Activated CD4-positive, alpha-beta memory T cell treated with anti-CD3 and anti-CD28 coated beads, Interleukin-2, amount 10 ng/mL, durations not matched to agents 7 days and 5 days (primary cell): ENCODE measurements at regions of chr9 and their contacts with region 1.

Region 1: GRCh38 chr9:83334320-83334719 is 203.9 kb downstream of the FRMD3 start:
- DNase-seq: peak; percentile 77
- H3K4me3 Mint-ChIP-seq: no peak overlapping the region
- H3K27ac Mint-ChIP-seq: no peak overlapping the region
- H3K4me1 Mint-ChIP-seq: peaks cover 4% of the 10 kb centered on the region
- H3K27me3 Mint-ChIP-seq: no peaks in the 10 kb centered on the region

Region 2: DNA sequence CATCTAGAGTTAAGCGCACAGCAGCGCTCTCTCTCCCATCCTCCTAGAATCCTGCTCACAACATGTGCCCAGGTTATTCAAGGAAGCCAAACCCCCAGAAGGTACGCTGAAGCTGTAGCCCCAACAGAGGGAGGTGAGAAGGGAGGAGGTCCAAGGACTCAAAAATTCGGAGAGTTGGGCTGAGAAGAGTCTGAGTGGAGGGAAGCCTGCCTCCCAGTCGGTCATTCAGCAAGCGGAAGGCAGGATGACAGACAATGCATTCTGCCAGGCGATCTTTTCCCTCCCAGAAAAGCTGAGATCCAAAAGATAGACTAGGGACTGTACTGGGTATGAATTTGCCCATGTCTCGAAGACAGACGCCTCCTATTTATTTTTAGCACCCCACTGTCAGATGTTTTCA is 14.7 kb after region 1 on chr9:
- CTCF ChIA-PET with region 1: interaction called, 10 read pairs
- POLR2A ChIA-PET with region 1: no interaction called
- DNase-seq: no peak
- H3K4me3 Mint-ChIP-seq: no peak overlapping the region
- H3K27ac Mint-ChIP-seq: no peak overlapping the region
- H3K4me1 Mint-ChIP-seq: no peaks in the 10 kb centered on the region
- H3K27me3 Mint-ChIP-seq: no peaks in the 10 kb centered on the region

Region 3: GRCh38 chr9:83544002-83544698 is 209.8 kb after region 1 on chr9:
- CTCF ChIA-PET with region 1: interaction called, 99 read pairs
- POLR2A ChIA-PET with region 1: no interaction called
- DNase-seq: no peak
- H3K4me3 Mint-ChIP-seq: no peak overlapping the region
- H3K27ac Mint-ChIP-seq: no peak overlapping the region
- H3K4me1 Mint-ChIP-seq: no peaks in the 10 kb centered on the region
- H3K27me3 Mint-ChIP-seq: peaks cover 13% of the 10 kb centered on the region

Region 4: DNA sequence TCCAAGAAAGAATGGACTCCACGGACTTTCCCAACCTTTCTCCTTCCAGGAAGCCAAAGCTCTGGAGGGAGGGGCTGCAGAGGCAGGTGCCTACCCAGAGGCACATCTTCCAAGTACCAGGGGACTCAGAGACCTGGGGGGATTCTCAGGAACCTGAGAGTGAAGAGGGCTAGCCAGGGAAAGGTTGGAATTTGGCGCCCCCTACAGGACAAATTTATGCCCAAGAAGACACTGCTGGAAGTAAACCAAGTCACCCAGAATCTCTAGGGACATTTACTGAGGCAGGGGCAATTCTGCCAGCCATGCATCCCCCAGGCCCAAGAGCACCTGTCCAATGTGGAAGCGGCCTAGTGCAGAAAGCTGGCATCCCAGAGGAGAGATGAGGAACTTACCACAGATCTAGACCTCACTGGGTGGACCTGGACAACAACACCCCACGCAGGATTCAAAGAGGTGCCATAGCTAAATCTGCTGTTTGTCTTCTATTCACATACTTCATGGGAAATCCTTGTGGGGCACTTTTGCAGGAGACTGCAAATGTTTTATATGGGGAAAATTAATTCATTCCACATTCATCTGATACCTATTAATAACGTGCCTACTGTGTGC is 262.7 kb after region 1 on chr9:
- CTCF ChIA-PET with region 1: interaction called, 24 read pairs
- POLR2A ChIA-PET with region 1: no interaction called
- DNase-seq: peak; percentile 41
- H3K4me3 Mint-ChIP-seq: no peak overlapping the region
- H3K27ac Mint-ChIP-seq: no peak overlapping the region
- H3K4me1 Mint-ChIP-seq: no peaks in the 10 kb centered on the region
- H3K27me3 Mint-ChIP-seq: no peaks in the 10 kb centered on the region